ENCODE measurements at regions of chr6 and their contacts with region 1.

Region 1: GRCh38 chr6:122869437-122870024 is 80.5 kb downstream of the SMPDL3A start:
- DNase-seq: peak; percentile 15 to 57
- ATAC-seq: peak; percentile 91 to 94
- H3K4me3 ChIP-seq: no peak overlapping the region
- H3K27ac ChIP-seq: no peak overlapping the region
- H3K4me1 ChIP-seq: peaks cover 23% of the 10 kb centered on the region
- CTCF ChIP-seq: peak; percentile 70
- EP300 ChIP-seq: no peak
- POLR2A ChIP-seq: no peak
- RAD21 ChIP-seq: peak; percentile 85 to 87

Region 2: GRCh38 chr6:123022975-123023374 is 153.4 kb after region 1 on chr6:
- CTCF ChIA-PET with region 1: no interaction called
- POLR2A ChIA-PET with region 1: no interaction called
- DNase-seq: no peak
- ATAC-seq: no peak
- H3K4me3 ChIP-seq: no peak overlapping the region
- H3K27ac ChIP-seq: no peak overlapping the region
- H3K4me1 ChIP-seq: no peaks in the 10 kb centered on the region
- CTCF ChIP-seq: no peak
- EP300 ChIP-seq: no peak
- POLR2A ChIP-seq: no peak
- RAD21 ChIP-seq: no peak

Region 3: GRCh38 chr6:123316733-123317323 is 447.3 kb after region 1 on chr6:
- CTCF ChIA-PET with region 1: interaction called, 34 read pairs
- POLR2A ChIA-PET with region 1: no interaction called
- DNase-seq: peak in 1 of 2 experiments; percentile 8
- ATAC-seq: no peak
- H3K4me3 ChIP-seq: no peak overlapping the region
- H3K27ac ChIP-seq: no peak overlapping the region
- H3K4me1 ChIP-seq: no peaks in the 10 kb centered on the region
- CTCF ChIP-seq: peak; percentile 33; the same call in 2 of the 3 replicates
- EP300 ChIP-seq: no peak
- POLR2A ChIP-seq: no peak
- RAD21 ChIP-seq: peak; percentile 30 to 62; a peak in 4 of 5 replicates

Region 4: DNA sequence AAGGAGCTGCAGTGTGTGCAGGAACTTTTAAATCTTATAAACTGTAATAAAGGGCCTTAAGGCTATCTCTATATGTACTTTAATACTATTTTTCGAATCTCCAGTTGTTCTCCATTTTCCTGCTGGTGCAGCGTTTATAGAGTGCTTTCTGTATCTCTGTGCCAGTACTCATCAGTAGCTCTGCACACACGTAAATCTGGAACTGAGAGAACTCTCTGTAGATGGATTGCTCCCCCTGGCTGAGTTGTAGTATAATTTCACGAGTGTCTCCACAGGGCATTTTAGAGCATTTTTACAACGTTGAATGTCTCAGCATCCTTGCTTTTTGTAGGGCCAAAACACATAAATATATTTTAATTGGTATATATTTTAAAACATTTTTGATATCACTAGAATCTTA is 510.7 kb after region 1 on chr6:
- CTCF ChIA-PET with region 1: interaction called, 20 read pairs
- POLR2A ChIA-PET with region 1: no interaction called
- DNase-seq: peak in 1 of 2 experiments; percentile 26
- ATAC-seq: peak; percentile 81 to 83
- H3K4me3 ChIP-seq: no peak overlapping the region
- H3K27ac ChIP-seq: no peak overlapping the region
- H3K4me1 ChIP-seq: no peaks in the 10 kb centered on the region
- CTCF ChIP-seq: 0 out of 3 replicates have a peak, but pooled peaks have one; percentile 13
- EP300 ChIP-seq: no peak
- POLR2A ChIP-seq: no peak
- RAD21 ChIP-seq: peak in 1 of 2 experiments; percentile 26; a peak in 1 of 5 replicates

Measured in A549 (cell line).